Tibial artery (tissue), 4 donors: ENCODE measurements at regions of chr10 and their contacts with region 1.

Region 1: GRCh38 chr10:13787015-13787421 is 200.3 kb downstream of the PRPF18 start:
- DNase-seq: peak in 1 of 2 donors; percentile 69
- H3K4me3 ChIP-seq: no peak overlapping the region
- H3K27ac ChIP-seq: peak overlapping the region; percentile 83 to 84
- H3K4me1 ChIP-seq: peaks cover 0 to 43% (median 25%) of the 10 kb centered on the region in 4 donors
- H3K27me3 ChIP-seq: no peaks in the 10 kb centered on the region
- CTCF ChIP-seq: no peak

Region 2: DNA sequence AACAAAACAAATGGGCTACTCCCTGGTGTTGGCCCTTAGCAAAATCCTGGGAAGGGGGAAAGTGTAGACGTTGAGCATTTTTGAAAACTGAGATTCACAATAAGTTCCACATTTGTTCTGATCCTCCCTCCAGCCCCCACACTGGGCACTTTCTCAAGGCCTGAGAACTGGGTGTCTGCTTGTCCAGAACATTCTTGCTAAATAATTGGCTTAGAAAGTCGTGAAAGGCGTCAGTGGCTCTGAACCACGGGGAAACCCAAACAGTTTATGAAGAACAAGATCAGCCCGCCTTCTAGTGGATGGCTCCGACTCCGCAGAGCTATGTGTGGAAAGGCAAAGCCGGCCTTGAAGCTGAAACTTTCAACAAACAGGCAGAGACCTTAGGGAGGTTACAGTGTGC is 169.8 kb after region 1 on chr10:
- intact Hi-C with region 1: loop called (anchors 5 kb)
- DNase-seq: peak; percentile 93 to 96
- H3K4me3 ChIP-seq: no peak overlapping the region
- H3K27ac ChIP-seq: peak overlapping the region; percentile 81 to 86
- H3K4me1 ChIP-seq: peaks cover 0 to 56% (median 23%) of the 10 kb centered on the region in 4 donors
- H3K27me3 ChIP-seq: no peaks in the 10 kb centered on the region
- CTCF ChIP-seq: peak; percentile 70 to 76

Region 3: DNA sequence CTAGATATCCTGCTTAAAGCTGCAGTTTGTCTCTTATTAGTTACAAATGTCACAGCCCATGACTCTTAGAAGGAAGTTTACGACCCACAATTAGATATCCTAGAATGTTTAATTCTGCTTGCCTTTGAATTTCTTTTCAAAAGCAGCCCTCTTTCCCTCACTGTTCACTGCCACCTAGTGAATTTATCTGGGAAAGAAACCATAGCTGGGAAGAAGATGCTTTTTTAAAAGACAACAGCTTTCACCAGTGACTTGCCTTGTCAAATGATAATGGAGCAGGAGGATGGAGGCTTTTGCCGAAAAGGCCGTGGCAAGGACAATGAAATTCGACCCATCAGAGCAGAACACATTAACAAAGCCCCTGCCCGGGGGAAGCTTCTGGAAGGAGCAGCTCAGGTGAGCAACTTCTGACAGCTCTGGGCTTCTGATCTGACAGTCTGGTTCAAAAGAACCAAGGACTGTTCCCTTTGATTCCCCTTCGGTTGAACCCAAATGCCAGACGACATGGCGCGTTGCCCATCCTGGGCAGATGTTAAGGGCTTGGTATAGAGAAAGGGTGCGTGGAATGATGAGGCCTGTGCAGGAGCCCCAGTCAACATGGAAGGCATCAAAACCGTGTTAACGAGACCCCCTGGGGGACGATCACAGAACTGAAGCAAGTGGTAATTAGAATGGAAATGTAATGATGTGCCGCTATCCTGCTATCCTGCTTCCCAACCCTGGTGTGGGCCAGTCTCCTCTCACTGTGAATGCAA is 306.9 kb after region 1 on chr10:
- intact Hi-C with region 1: loop called (anchors 5 kb)
- DNase-seq: no peak
- H3K4me3 ChIP-seq: no peak overlapping the region
- H3K27ac ChIP-seq: no peak overlapping the region
- H3K4me1 ChIP-seq: peaks cover 0 to 9% (median 3%) of the 10 kb centered on the region in 4 donors
- H3K27me3 ChIP-seq: no peaks in the 10 kb centered on the region
- CTCF ChIP-seq: peak; percentile 41 to 44

Region 4: DNA sequence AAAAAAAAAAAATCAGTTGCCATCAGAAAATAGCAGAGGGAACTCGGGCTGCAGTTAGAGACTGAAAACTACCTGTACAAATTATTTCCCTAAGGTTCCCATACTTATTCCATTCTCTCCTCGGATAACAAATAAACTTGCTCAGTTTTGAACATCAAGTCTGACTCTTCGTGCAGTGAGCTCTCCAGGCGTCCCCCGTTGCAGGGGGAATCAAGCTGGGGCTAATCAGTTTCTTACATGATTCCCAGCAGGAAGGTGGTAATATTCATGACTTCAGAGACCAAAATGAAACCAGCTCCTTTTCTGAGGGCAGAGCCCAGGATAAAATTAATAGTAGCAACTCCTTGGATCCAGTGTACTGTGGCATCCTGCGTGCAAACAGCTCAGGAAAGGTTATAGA is 408.4 kb after region 1 on chr10:
- intact Hi-C with region 1: loop called (anchors 5 kb)
- DNase-seq: no peak
- H3K4me3 ChIP-seq: no peak overlapping the region
- H3K27ac ChIP-seq: no peak overlapping the region
- H3K4me1 ChIP-seq: no peaks in the 10 kb centered on the region
- H3K27me3 ChIP-seq: peaks cover 0 to 38% of the 10 kb centered on the region in 2 donors
- CTCF ChIP-seq: no peak

Region 5: DNA sequence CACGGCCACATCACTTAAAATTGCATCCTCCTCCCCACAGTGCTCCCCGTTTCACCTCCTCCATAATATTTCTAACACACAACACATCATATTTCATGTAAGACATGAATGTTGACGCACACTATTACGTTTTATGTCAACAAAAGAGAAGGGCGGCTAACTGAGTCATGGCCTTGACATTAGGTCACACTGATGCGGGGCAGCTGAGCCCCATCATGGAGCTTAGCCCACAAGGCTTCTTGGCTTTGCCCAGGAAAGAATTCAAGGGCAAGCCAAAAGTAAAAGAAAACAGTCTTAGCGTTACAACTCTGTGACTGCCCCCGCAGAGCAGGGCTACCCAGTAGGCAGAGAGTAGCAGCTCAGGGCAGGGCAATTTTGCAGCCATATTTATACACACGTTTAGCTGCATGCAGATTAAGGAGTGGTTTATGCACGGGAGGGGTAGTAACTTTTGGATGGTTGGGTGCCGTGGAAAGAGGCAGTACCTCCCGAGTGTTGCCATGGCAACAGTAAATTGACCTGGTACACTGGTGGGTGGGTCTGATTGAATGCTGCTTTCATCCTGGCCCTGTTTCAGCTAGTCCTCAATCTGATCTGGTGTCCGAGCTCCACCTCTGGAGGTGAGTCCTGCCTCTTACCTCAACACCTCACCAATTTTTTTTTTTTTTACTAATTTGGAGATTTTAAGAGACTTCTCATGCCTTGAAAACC is 699.9 kb after region 1 on chr10:
- intact Hi-C with region 1: loop called (anchors 10 kb)
- DNase-seq: no peak
- H3K4me3 ChIP-seq: no peak overlapping the region
- H3K27ac ChIP-seq: no peak overlapping the region
- H3K4me1 ChIP-seq: peaks cover 0 to 14% (median 4%) of the 10 kb centered on the region in 4 donors
- H3K27me3 ChIP-seq: peaks cover 0 to 20% of the 10 kb centered on the region in 2 donors
- CTCF ChIP-seq: no peak